Activated CD8-positive, alpha-beta T cell treated with anti-CD3 and anti-CD28 coated beads for 36 hours (primary cell): ENCODE measurements at regions of chr11 and their contacts with region 1.

Region 1: DNA sequence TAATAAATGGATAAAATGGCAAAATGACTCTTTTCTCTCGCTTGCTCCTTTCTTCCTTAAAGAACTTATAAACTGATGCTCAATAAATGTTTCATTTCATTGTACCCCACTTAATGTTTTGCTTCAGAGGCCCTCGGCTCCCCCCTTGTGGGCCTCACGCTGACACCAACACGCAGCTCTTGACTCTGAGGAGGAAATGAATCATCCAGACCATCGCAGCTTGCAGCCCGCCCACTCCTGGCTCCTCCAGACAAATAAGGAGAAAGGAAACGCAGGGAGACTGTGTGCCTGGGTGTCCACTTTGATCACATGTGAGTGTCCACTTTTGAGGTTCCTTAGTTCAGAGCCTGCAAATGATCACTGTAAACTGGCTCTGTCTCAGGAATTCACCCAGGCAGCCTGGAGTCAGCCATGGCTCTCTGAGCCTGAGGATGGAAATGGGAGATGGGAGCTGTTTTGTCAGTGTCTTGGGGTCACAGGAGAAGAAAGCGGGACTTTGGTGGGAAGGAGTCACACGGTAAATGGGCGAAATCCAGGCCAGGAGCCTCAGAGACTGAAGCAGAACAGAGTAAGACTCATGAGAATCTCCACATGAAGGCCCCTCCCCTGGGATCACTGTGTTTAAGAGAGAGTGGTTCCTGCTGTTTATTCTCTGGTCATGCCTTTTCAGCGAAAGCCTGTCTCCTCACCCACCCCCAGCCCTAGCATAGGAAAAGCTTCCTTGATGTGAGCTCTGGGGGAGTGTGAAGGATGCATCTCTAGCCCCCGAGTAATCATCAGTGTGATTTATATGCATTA is 96.5 kb downstream of the CWC15 start:
- DNase-seq: peak; percentile 93
- ATAC-seq: peak; percentile 97
- H3K4me3 Mint-ChIP-seq: peak overlapping the region; percentile 35
- H3K27ac Mint-ChIP-seq: peak overlapping the region; percentile 86
- H3K4me1 Mint-ChIP-seq: peaks cover 24% of the 10 kb centered on the region
- H3K27me3 Mint-ChIP-seq: no peaks in the 10 kb centered on the region
- CTCF ChIP-seq: peak; percentile 29

Region 2: DNA sequence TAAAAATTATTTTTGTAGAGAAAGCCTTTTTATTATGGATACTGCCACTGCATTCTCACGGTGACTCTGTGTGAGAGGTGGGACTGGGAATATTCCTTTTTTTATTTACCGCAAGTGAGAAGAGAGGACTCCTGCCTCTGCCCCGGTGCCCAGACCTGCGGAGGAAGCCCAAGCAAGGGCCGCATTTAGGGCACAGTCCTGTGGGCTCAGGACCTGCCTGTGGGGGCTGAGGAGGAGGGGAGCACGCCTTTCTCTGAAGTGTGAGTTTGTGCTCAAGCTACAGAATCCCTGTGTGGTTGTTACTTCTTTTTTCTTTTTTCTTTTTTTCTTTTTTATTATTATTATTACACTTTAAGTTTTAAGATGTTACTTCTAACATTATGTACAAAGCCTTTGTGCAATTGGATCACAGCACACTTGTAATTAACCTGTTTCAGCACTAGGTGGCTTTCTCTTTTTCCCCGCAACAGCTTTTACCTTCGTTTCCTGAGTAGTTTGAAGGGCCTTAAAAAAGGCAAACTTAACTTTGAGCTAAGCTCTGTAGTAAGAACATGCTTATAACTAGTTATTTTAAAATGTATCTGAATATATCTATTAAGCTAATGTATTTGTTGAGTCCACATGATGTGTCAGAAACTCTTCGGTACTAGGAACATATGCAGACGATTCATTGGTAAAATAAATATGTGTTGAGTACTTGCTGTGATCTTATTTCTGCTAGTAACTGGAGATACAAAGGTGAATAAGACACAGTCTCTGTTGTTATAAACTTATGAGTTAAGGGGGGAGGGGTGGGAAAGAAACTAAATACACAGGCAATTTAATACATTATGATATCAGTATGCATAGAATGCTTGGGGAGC is 90.3 kb before region 1 on chr11:
- CTCF ChIA-PET with region 1: interaction called, 4 read pairs
- POLR2A ChIA-PET with region 1: no interaction called
- intact Hi-C with region 1: loop called (anchors 2 kb)
- DNase-seq: no peak
- ATAC-seq: peak; percentile 61
- H3K4me3 Mint-ChIP-seq: no peak overlapping the region
- H3K27ac Mint-ChIP-seq: no peak overlapping the region
- H3K4me1 Mint-ChIP-seq: no peaks in the 10 kb centered on the region
- H3K27me3 Mint-ChIP-seq: peaks cover 7% of the 10 kb centered on the region
- CTCF ChIP-seq: peak; percentile 73